Natural killer cell (primary cell): ENCODE measurements at regions of chr2 and their contacts with region 1.

Region 1: GRCh38 chr2:112584134-112584890 is at the start of gene CHCHD5:
- DNase-seq: peak; percentile 89 to 95
- ATAC-seq: peak; percentile 87 to 95 (median 91)
- H3K4me3 ChIP-seq: peak within 1 kb of the TSS; percentile 94
- H3K4me3 Mint-ChIP-seq: peak within 1 kb of the TSS; percentile 97
- H3K27ac ChIP-seq: peak within 1 kb of the TSS; percentile 96
- H3K27ac Mint-ChIP-seq: peak within 1 kb of the TSS; percentile 95 to 98
- H3K4me1 ChIP-seq: peaks cover 27% of the 10 kb centered on the region
- H3K4me1 Mint-ChIP-seq: peaks cover 31 to 38% of the 10 kb centered on the region in 2 donors
- H3K27me3 ChIP-seq: no peaks in the 10 kb centered on the region
- H3K27me3 Mint-ChIP-seq: no peaks in the 10 kb centered on the region
- CTCF ChIP-seq: no peak
- total RNA-seq, gene CHCHD5: 21.9 to 24.1 (median 22.4) TPM

Region 2: GRCh38 chr2:112254466-112255239 is 329.7 kb before region 1 on chr2 and contains the start of gene ZC3H8:
- intact Hi-C with region 1: loop called (anchors 5 kb)
- DNase-seq: peak; percentile 96 to 98
- ATAC-seq: peak; percentile 91 to 97 (median 92)
- H3K4me3 ChIP-seq: peak within 1 kb of the TSS; percentile 75
- H3K4me3 Mint-ChIP-seq: peak within 1 kb of the TSS; percentile 88
- H3K27ac ChIP-seq: peak within 1 kb of the TSS; percentile 92
- H3K27ac Mint-ChIP-seq: peak within 1 kb of the TSS; percentile 86 to 88
- H3K4me1 ChIP-seq: peaks cover 10% of the 10 kb centered on the region
- H3K4me1 Mint-ChIP-seq: peaks cover 11 to 16% of the 10 kb centered on the region in 2 donors
- H3K27me3 ChIP-seq: no peaks in the 10 kb centered on the region
- H3K27me3 Mint-ChIP-seq: no peaks in the 10 kb centered on the region
- CTCF ChIP-seq: peak; percentile 24
- total RNA-seq, gene ZC3H8: 9.3 to 20.3 (median 16.0) TPM

Region 3: GRCh38 chr2:112454586-112454985 is 129.7 kb before region 1 on chr2:
- intact Hi-C with region 1: no loop called
- DNase-seq: no peak
- ATAC-seq: no peak
- H3K4me3 ChIP-seq: no peak overlapping the region
- H3K4me3 Mint-ChIP-seq: no peak overlapping the region
- H3K27ac ChIP-seq: no peak overlapping the region
- H3K27ac Mint-ChIP-seq: no peak overlapping the region
- H3K4me1 ChIP-seq: no peaks in the 10 kb centered on the region
- H3K4me1 Mint-ChIP-seq: no peaks in the 10 kb centered on the region
- H3K27me3 ChIP-seq: no peaks in the 10 kb centered on the region
- H3K27me3 Mint-ChIP-seq: peaks cover 0 to 7% of the 10 kb centered on the region in 2 donors
- CTCF ChIP-seq: no peak

Region 4: DNA sequence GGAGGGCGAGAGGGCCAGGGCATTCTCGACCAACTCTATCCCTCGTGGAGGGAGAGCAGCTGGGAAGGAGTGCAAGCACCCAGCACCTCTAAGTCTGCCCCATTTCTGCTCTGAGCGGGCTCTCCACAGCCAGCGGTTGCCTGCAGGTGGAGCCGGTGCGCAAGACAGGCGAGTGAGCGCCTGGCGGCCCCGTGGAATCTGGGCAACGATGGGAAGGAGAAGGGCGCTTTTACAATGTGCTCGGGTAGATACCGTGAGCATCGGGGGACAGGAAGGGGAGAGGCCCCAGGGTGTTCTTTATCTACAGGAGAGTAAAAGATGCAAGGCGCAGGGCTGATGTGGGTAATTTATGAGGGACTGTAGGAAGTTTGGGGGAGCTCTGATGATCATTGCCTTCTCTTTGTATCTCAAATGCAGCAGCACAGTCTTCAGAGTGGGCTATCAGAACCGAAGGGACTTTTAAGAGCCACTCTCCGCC is 103.2 kb before region 1 on chr2:
- intact Hi-C with region 1: loop called (anchors 1 kb)
- DNase-seq: peak; percentile 71 to 91
- ATAC-seq: peak; percentile 76 to 82 (median 77)
- H3K4me3 ChIP-seq: peak overlapping the region; percentile 72
- H3K4me3 Mint-ChIP-seq: peak overlapping the region; percentile 99
- H3K27ac ChIP-seq: peak overlapping the region; percentile 77
- H3K27ac Mint-ChIP-seq: peak overlapping the region; percentile 83 to 87
- H3K4me1 ChIP-seq: peaks cover 22% of the 10 kb centered on the region
- H3K4me1 Mint-ChIP-seq: peaks cover 30% of the 10 kb centered on the region in 2 donors
- H3K27me3 ChIP-seq: no peaks in the 10 kb centered on the region
- H3K27me3 Mint-ChIP-seq: no peaks in the 10 kb centered on the region
- CTCF ChIP-seq: peak; percentile 74

Region 5: GRCh38 chr2:112542123-112542983 is 42.0 kb before region 1 on chr2 and contains the start of gene POLR1B:
- intact Hi-C with region 1: loop called (anchors 1 kb)
- DNase-seq: peak; percentile 75 to 84
- ATAC-seq: peak; percentile 79 to 88 (median 84)
- H3K4me3 ChIP-seq: peak within 1 kb of the TSS; percentile 81
- H3K4me3 Mint-ChIP-seq: no peak within 1 kb of the TSS
- H3K27ac ChIP-seq: peak within 1 kb of the TSS; percentile 88
- H3K27ac Mint-ChIP-seq: no peak within 1 kb of the TSS
- H3K4me1 ChIP-seq: peaks cover 17% of the 10 kb centered on the region
- H3K4me1 Mint-ChIP-seq: peaks cover 5 to 6% of the 10 kb centered on the region in 2 donors
- H3K27me3 ChIP-seq: no peaks in the 10 kb centered on the region
- H3K27me3 Mint-ChIP-seq: no peaks in the 10 kb centered on the region
- CTCF ChIP-seq: no peak
- total RNA-seq, gene POLR1B: 16.2 to 26.5 (median 22.1) TPM

Region 6: GRCh38 chr2:112645310-112646101 is 61.2 kb after region 1 on chr2 and contains the start of gene SLC20A1:
- intact Hi-C with region 1: loop called (anchors 5 kb)
- DNase-seq: peak; percentile 98 to 99
- ATAC-seq: peak; percentile 91 to 99 (median 91)
- H3K4me3 ChIP-seq: peak within 1 kb of the TSS; percentile 95
- H3K4me3 Mint-ChIP-seq: peak within 1 kb of the TSS; percentile 94
- H3K27ac ChIP-seq: peak within 1 kb of the TSS; percentile 90
- H3K27ac Mint-ChIP-seq: peak within 1 kb of the TSS; percentile 89 to 91
- H3K4me1 ChIP-seq: peaks cover 41% of the 10 kb centered on the region
- H3K4me1 Mint-ChIP-seq: peaks cover 77 to 80% of the 10 kb centered on the region in 2 donors
- H3K27me3 ChIP-seq: no peaks in the 10 kb centered on the region
- H3K27me3 Mint-ChIP-seq: no peaks in the 10 kb centered on the region
- CTCF ChIP-seq: peak; percentile 59
- total RNA-seq, gene SLC20A1: 193 to 241 (median 233) TPM

Region 7: DNA sequence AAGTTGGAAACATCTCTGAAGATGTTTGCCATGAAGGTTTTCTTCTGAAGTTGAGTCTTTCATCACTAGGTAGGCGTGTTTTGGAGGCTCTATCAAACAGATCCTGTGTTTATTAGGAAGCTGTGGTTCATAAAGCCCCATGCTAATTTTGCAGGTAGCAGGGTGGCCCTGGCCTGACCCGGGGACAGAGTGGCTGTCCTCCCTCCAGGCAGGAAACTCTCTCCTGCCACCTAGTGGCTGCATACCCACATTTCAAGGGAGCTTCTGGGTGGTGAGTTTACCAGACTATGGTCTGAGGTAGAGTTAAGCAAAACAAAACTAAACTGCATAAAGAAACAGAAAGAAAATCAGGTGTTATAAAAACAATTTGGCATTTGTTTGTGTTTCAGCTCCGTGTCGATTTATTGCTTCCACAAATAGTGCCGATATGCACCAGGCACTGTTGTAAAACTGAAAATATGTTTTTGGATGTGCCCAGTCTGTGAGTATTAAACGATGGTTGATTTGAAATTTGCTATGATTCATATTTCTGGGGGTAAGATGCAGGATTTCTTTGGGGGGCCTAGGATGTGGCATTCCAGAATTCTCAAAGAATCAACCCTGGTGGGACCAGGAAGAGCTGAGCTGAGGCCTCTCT is 300.7 kb after region 1 on chr2:
- intact Hi-C with region 1: loop called (anchors 5 kb)
- DNase-seq: peak; percentile 68 to 78
- ATAC-seq: peak; percentile 61 to 82 (median 75)
- H3K4me3 ChIP-seq: no peak overlapping the region
- H3K4me3 Mint-ChIP-seq: peak overlapping the region; percentile 28
- H3K27ac ChIP-seq: no peak overlapping the region
- H3K27ac Mint-ChIP-seq: peak overlapping the region; percentile 34 to 52
- H3K4me1 ChIP-seq: peaks cover 18% of the 10 kb centered on the region
- H3K4me1 Mint-ChIP-seq: peaks cover 31 to 32% of the 10 kb centered on the region in 2 donors
- H3K27me3 ChIP-seq: no peaks in the 10 kb centered on the region
- H3K27me3 Mint-ChIP-seq: peaks cover 0 to 3% of the 10 kb centered on the region in 2 donors
- CTCF ChIP-seq: peak; percentile 91